ENCODE measurements at regions of chr5 and their contacts with region 1.

Region 1: GRCh38 chr5:41843456-41844370 is 26.5 kb downstream of the OXCT1 start:
- DNase-seq: no peak
- H3K4me3 ChIP-seq: no peak overlapping the region
- H3K27ac ChIP-seq: no peak overlapping the region
- H3K4me1 ChIP-seq: no peaks in the 10 kb centered on the region
- H3K27me3 ChIP-seq: no peaks in the 10 kb centered on the region
- CTCF ChIP-seq: peak; percentile 69 to 82 (median 72)
- EP300 ChIP-seq: no peak
- POLR2A ChIP-seq: no peak

Region 2: GRCh38 chr5:40904205-40904993 is 939.3 kb before region 1 on chr5:
- intact Hi-C with region 1: loop called (anchors 5 kb)
- DNase-seq: no peak
- H3K4me3 ChIP-seq: no peak overlapping the region
- H3K27ac ChIP-seq: peak overlapping the region in 1 of 4 donors; percentile 45
- H3K4me1 ChIP-seq: peaks cover 0 to 12% (median 5%) of the 10 kb centered on the region in 4 donors
- H3K27me3 ChIP-seq: no peaks in the 10 kb centered on the region
- CTCF ChIP-seq: peak; percentile 60 to 86 (median 69)
- EP300 ChIP-seq: no peak
- POLR2A ChIP-seq: no peak

Region 3: GRCh38 chr5:41270423-41271251 is 573.1 kb before region 1 on chr5:
- intact Hi-C with region 1: loop called (anchors 5 kb)
- DNase-seq: no peak
- H3K4me3 ChIP-seq: no peak overlapping the region
- H3K27ac ChIP-seq: no peak overlapping the region
- H3K4me1 ChIP-seq: no peaks in the 10 kb centered on the region
- H3K27me3 ChIP-seq: no peaks in the 10 kb centered on the region
- CTCF ChIP-seq: peak; percentile 54 to 71 (median 54)
- EP300 ChIP-seq: no peak
- POLR2A ChIP-seq: no peak

Region 4: GRCh38 chr5:41695920-41696582 is 147.7 kb before region 1 on chr5:
- intact Hi-C with region 1: loop called (anchors 5 kb)
- DNase-seq: no peak
- H3K4me3 ChIP-seq: no peak overlapping the region
- H3K27ac ChIP-seq: no peak overlapping the region
- H3K4me1 ChIP-seq: no peaks in the 10 kb centered on the region
- H3K27me3 ChIP-seq: peaks cover 0 to 5% (median 0%) of the 10 kb centered on the region in 4 donors
- CTCF ChIP-seq: peak in 2 of 3 experiments; percentile 10 to 21
- EP300 ChIP-seq: no peak
- POLR2A ChIP-seq: no peak